Stomach (tissue), 19 donors: ENCODE measurements at regions of chr1 and their contacts with region 1.

Region 1: GRCh38 chr1:236113324-236114032 is 28.9 kb upstream of the GPR137B start:
- DNase-seq: no peak
- H3K4me3 ChIP-seq: no peak overlapping the region
- H3K27ac ChIP-seq: no peak overlapping the region
- H3K4me1 ChIP-seq: peaks cover 0 to 5% (median 0%) of the 10 kb centered on the region in 4 donors
- H3K27me3 ChIP-seq: no peaks in the 10 kb centered on the region
- CTCF ChIP-seq: no peak
- EP300 ChIP-seq: no peak
- POLR2A ChIP-seq: no peak

Region 2: DNA sequence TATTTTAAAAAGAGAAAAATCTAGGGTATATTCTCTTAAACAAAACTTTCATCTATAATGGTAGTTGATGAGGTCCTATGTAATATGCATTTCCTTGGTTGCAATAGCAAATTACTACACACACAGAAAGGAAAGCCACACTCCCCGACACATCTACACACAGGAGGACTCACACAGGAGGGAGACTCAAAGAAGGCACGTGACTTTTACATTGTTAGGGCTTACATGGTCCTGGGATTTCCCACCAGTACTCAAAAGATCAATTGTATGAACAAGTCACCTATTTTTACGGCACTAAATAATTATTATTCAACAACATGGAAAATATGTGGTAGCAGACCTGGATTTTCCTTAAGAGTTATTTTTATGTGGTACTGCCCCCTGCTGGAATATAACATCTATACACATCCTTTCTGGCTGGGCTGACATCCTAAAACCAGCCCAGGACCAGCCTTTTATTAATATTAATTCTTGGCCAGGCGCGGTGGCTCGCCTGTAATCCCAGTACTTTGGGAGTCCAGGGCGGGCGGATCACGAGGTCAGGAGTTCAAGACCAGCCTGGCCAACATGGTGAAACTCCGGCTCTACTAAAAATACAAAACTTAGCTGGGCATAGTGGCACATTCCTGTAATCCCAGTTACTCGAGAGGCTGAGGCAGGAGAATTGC is 376.4 kb after region 1 on chr1:
- intact Hi-C with region 1: loop called (anchors 5 kb)
- DNase-seq: peak; percentile 31 to 79
- H3K4me3 ChIP-seq: no peak overlapping the region
- H3K27ac ChIP-seq: no peak overlapping the region
- H3K4me1 ChIP-seq: peaks cover 0 to 7% (median 0%) of the 10 kb centered on the region in 4 donors
- H3K27me3 ChIP-seq: no peaks in the 10 kb centered on the region
- CTCF ChIP-seq: peak in 4 of 7 experiments; percentile 42 to 66 (median 58)
- EP300 ChIP-seq: no peak
- POLR2A ChIP-seq: no peak